ENCODE measurements at regions of chr19 and their contacts with region 1.

Region 1: GRCh38 chr19:4815426-4816201 is 15.9 kb downstream of the TICAM1 start:
- DNase-seq: peak; percentile 60 to 76 (median 68)
- H3K4me3 ChIP-seq: peak overlapping the region in 1 of 2 donors; percentile 16
- H3K4me3 Mint-ChIP-seq: peak overlapping the region; percentile 55 to 85 (median 80)
- H3K27ac ChIP-seq: no peak overlapping the region
- H3K27ac Mint-ChIP-seq: peak overlapping the region; percentile 43 to 94 (median 88)
- H3K4me1 ChIP-seq: peaks cover 8% of the 10 kb centered on the region
- H3K4me1 Mint-ChIP-seq: peaks cover 9 to 21% (median 13%) of the 10 kb centered on the region in 4 donors
- H3K27me3 ChIP-seq: no peaks in the 10 kb centered on the region
- H3K27me3 Mint-ChIP-seq: no peaks in the 10 kb centered on the region

Region 2: DNA sequence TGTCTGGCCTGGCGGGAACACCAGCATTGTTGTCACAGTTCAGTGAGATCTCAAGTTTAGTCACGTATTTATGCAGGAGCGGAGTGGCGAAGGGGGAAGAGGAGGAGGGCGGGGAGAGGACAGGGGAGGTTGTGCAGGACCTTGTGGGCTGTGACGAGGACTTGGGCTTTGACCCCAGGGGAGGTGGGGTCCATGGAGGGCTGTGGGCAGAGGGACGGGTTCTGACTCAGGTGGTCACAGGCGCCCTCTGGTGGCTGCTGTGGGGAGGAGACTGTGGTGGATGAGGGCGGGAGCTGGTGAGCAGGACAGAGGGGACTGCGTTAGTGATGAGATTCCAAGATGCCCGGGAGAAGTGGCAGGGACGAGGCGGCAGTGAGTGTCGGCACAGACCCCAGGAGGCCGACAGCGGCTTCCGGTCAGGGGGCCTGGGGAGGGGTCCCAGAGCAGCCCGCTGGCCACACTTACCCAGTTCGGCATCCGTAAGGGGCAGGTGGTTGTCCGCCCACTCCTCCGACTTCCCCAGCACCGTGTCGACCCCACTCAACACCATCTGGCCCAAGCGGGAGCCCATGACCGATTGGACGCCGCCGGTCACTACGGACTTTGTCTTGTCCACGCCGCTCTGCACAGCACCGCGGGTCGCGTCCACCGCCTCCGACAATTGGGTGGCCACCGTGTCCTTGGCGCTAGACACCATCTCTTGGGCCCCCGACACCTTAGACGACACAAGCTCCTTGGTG is 36.1 kb after region 1 on chr19:
- CTCF ChIA-PET with region 1: interaction called, 396 read pairs
- POLR2A ChIA-PET with region 1: interaction called, 3 read pairs
- intact Hi-C with region 1: no loop called
- DNase-seq: peak; percentile 52 to 72 (median 66)
- H3K4me3 ChIP-seq: no peak overlapping the region
- H3K4me3 Mint-ChIP-seq: no peak overlapping the region
- H3K27ac ChIP-seq: no peak overlapping the region
- H3K27ac Mint-ChIP-seq: peak overlapping the region in 3 of 7 donors; percentile 30 to 47 (median 41)
- H3K4me1 ChIP-seq: no peaks in the 10 kb centered on the region
- H3K4me1 Mint-ChIP-seq: peaks cover 0 to 4% (median 2%) of the 10 kb centered on the region in 4 donors
- H3K27me3 ChIP-seq: no peaks in the 10 kb centered on the region
- H3K27me3 Mint-ChIP-seq: no peaks in the 10 kb centered on the region

Region 3: GRCh38 chr19:4867534-4868285 is 52.1 kb after region 1 on chr19 and contains the start of gene PLIN3:
- CTCF ChIA-PET with region 1: interaction called, 33 read pairs
- POLR2A ChIA-PET with region 1: no interaction called
- intact Hi-C with region 1: no loop called
- DNase-seq: peak; percentile 78 to 89 (median 79)
- H3K4me3 ChIP-seq: peak within 1 kb of the TSS; percentile 60 to 76
- H3K4me3 Mint-ChIP-seq: peak within 1 kb of the TSS; percentile 85 to 92 (median 86)
- H3K27ac ChIP-seq: peak within 1 kb of the TSS; percentile 74
- H3K27ac Mint-ChIP-seq: peak within 1 kb of the TSS; percentile 79 to 91 (median 87)
- H3K4me1 ChIP-seq: peaks cover 10% of the 10 kb centered on the region
- H3K4me1 Mint-ChIP-seq: peaks cover 10 to 21% (median 14%) of the 10 kb centered on the region in 4 donors
- H3K27me3 ChIP-seq: no peaks in the 10 kb centered on the region
- H3K27me3 Mint-ChIP-seq: peaks cover 2 to 3% of the 10 kb centered on the region in 2 donors
- total RNA-seq, gene PLIN3: 16.0 to 18.2 TPM

Region 4: DNA sequence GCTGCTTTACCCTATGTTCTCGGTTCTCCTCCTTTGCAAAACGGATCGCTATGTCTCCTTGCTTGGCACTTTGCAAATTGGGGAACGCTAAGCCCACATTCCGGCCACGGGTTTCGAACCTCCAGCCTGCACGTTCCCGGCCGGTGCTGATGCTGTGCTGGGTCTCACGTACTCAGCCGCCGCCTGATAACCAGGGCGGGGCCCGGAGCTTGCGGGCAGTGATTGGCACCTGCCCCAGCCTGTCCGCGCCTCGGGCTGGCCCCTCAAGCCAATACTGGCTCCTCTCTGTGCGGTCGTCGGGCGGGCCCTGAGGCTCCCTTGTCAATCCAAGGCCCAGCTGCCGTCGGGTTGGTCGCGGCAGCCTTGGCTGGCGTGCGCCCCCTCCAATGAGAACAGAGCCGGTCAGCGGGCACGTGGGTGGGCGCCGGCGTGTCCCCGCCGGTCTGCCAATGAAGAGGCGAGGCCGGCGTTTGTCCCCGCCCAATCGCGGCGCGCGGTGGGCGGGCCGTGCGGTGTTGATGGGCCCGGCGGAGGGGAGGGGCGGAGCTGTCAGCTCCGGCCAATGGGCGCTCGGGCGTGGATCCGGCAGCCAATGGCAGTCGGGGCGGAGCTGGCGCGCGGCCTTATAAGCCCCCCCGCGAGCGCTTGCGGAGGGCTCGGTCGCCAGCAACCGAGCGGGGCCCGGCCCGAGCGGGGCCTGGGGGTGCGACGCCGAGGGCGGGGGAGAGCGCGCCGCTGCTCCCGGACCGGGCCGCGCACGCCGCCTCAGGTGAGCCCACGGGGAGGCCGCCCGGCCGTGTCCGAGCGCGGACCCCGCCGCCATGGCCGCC is 153.1 kb after region 1 on chr19 and contains the start of gene KDM4B:
- CTCF ChIA-PET with region 1: interaction called, 12 read pairs
- POLR2A ChIA-PET with region 1: no interaction called
- intact Hi-C with region 1: no loop called
- DNase-seq: peak; percentile 99 to 100 (median 100)
- H3K4me3 ChIP-seq: peak within 1 kb of the TSS; percentile 33 to 66
- H3K4me3 Mint-ChIP-seq: peak within 1 kb of the TSS; percentile 89 to 97 (median 92)
- H3K27ac ChIP-seq: peak within 1 kb of the TSS; percentile 42
- H3K27ac Mint-ChIP-seq: peak within 1 kb of the TSS; percentile 83 to 97 (median 94)
- H3K4me1 ChIP-seq: peaks cover 37% of the 10 kb centered on the region
- H3K4me1 Mint-ChIP-seq: peaks cover 24 to 40% (median 33%) of the 10 kb centered on the region in 4 donors
- H3K27me3 ChIP-seq: no peaks in the 10 kb centered on the region
- H3K27me3 Mint-ChIP-seq: no peaks in the 10 kb centered on the region
- total RNA-seq, gene KDM4B: 47.9 to 50.4 TPM